ENCODE measurements at regions of chrX and their contacts with region 1.

Region 1: GRCh38 chrX:54357414-54358377 is at the start of gene WNK3:
- DNase-seq: peak; percentile 50
- H3K4me3 ChIP-seq: peak within 1 kb of the TSS in 3 of 4 donors; percentile 24 to 47 (median 29)
- H3K27ac ChIP-seq: peak within 1 kb of the TSS; percentile 33 to 78 (median 68)
- H3K4me1 ChIP-seq: peaks cover 0 to 3% (median 0%) of the 10 kb centered on the region in 4 donors
- H3K27me3 ChIP-seq: peaks cover 18% of the 10 kb centered on the region
- CTCF ChIP-seq: no peak
- EP300 ChIP-seq: no peak
- POLR2A ChIP-seq: no peak
- total RNA-seq, gene WNK3: 0.27 to 1.9 (median 0.64) TPM

Region 2: GRCh38 chrX:54271664-54272063 is 86.0 kb before region 1 on chrX:
- in situ Hi-C with region 1: loop called in 1 of 4 experiments (anchors 25 kb)
- intact Hi-C with region 1: no loop called
- DNase-seq: no peak
- H3K4me3 ChIP-seq: no peak overlapping the region
- H3K27ac ChIP-seq: no peak overlapping the region
- H3K4me1 ChIP-seq: no peaks in the 10 kb centered on the region
- H3K27me3 ChIP-seq: no peaks in the 10 kb centered on the region
- CTCF ChIP-seq: no peak
- EP300 ChIP-seq: no peak
- POLR2A ChIP-seq: no peak

Region 3: DNA sequence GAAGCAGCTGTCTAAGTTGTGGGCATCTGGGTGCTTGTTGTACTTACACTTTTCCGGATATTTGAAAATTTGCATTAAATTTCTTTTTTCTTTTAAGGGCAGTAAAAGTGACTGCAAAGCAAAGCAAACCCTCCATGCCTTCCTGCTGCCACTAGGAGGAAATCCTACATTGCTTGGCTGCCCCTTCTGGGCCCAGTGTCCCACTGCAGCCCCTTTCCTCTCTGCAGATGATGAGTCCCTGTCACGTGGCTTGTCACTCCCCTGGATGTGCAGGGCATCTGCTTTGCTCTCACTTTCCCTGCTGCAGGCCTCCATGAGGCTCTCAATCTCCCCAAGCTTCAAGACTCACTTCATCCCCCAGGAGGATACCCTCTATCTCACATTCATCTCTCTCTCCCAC is 95.2 kb after region 1 on chrX:
- in situ Hi-C with region 1: no loop called
- intact Hi-C with region 1: no loop called
- DNase-seq: no peak
- H3K4me3 ChIP-seq: no peak overlapping the region
- H3K27ac ChIP-seq: no peak overlapping the region
- H3K4me1 ChIP-seq: no peaks in the 10 kb centered on the region
- H3K27me3 ChIP-seq: no peaks in the 10 kb centered on the region
- CTCF ChIP-seq: no peak
- EP300 ChIP-seq: no peak
- POLR2A ChIP-seq: no peak